ENCODE measurements at regions of chr7 and their contacts with region 1.

Region 1: GRCh38 chr7:112414855-112415490 is 35.3 kb upstream of the IFRD1 start:
- DNase-seq: peak; percentile 42
- ATAC-seq: peak; percentile 80
- H3K4me3 ChIP-seq: no peak overlapping the region
- H3K27ac ChIP-seq: no peak overlapping the region
- H3K4me1 ChIP-seq: peaks cover 32% of the 10 kb centered on the region
- H3K27me3 ChIP-seq: no peaks in the 10 kb centered on the region
- CTCF ChIP-seq: peak; percentile 75
- EP300 ChIP-seq: no peak
- POLR2A ChIP-seq: no peak
- RAD21 ChIP-seq: peak; percentile 36; the same call in 1 of the 2 replicates

Region 2: DNA sequence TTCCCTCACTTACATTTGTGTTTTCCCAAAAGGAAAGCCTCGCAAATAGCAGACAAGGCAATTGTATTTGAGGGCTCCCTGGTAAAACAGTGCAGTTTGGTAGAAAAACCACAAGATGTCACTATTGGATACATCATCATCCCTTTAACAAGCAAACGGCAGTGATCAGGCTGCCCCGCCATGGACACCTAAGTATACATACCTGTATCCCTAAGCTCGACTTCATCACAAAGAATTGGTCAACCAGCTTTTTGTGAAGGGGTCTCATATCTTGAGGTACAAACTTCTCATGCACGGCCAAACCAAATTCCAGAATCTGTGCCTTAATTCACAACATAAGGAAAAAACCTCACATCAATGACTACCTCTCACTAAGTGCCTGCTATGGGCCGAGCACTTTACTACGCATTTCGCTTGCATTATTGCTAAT is 673.1 kb before region 1 on chr7:
- CTCF ChIA-PET with region 1: interaction called, 6 read pairs
- POLR2A ChIA-PET with region 1: no interaction called
- in situ Hi-C with region 1: no loop called
- intact Hi-C with region 1: loop called (anchors 1 kb)
- DNase-seq: peak; percentile 61
- ATAC-seq: peak; percentile 92
- H3K4me3 ChIP-seq: no peak overlapping the region
- H3K27ac ChIP-seq: no peak overlapping the region
- H3K4me1 ChIP-seq: peaks cover 7% of the 10 kb centered on the region
- H3K27me3 ChIP-seq: no peaks in the 10 kb centered on the region
- CTCF ChIP-seq: peak; percentile 75
- EP300 ChIP-seq: no peak
- POLR2A ChIP-seq: no peak
- RAD21 ChIP-seq: peak; percentile 53; the same call in 1 of the 2 replicates

Region 3: DNA sequence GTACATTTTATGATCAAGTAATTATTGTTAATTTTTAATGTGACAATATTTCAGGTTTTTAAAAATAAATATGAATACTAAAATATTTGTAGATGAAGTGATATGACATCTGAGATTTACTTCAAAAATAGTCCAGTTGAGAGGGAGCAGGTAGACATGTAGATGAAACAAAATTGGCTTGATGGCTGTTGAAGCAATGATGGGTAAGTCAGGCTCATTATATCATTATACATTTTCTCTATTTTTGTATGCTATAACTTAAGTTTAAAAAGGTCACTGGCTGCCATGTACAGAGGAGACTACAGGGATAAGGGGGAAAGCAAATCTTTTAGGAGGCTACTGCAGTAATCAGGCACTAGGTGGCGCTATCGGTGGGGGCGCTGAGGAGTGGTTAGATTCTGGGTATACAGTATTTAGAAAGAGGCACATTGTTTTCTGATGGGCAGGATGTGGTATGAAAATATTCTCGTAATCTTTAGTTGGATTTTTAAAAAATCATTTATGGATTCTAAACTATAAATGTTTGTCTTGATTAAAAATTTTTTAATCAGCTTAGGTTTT is 662.9 kb before region 1 on chr7:
- CTCF ChIA-PET with region 1: no interaction called
- POLR2A ChIA-PET with region 1: no interaction called
- in situ Hi-C with region 1: loop called (anchors 5 kb)
- intact Hi-C with region 1: no loop called
- DNase-seq: peak; percentile 54
- ATAC-seq: peak; percentile 96
- H3K4me3 ChIP-seq: no peak overlapping the region
- H3K27ac ChIP-seq: no peak overlapping the region
- H3K4me1 ChIP-seq: peaks cover 28% of the 10 kb centered on the region
- H3K27me3 ChIP-seq: no peaks in the 10 kb centered on the region
- CTCF ChIP-seq: peak; percentile 79
- EP300 ChIP-seq: no peak
- POLR2A ChIP-seq: no peak
- RAD21 ChIP-seq: 0 out of 2 replicates have a peak, but pooled peaks have one; percentile 34

Region 4: DNA sequence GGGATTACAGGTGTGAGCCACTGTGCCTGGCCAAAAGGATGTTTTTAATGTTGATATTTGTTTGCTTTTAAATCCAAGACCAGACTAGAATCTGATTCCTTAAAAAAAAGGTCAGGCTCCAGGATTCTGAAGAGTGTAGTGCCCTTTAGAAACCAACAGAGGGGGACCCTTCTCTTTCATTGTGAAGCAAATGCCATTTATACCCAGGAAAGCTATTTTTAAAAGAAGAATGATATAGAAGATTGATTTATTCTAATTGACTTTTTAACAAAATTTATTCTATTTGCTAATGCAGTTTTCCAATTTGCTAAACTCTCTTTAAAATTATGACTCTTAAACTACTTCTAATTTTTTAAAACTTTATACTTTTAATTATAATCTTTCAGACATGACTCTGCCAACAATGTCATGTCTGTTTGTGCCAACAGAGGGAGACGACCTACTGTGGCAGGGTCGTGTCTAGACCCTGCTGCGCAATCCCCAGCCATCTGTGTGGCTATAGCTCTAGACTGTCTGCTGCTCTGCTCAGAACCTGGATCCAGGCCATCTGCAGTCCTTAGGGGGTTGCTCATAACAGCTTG is 651.7 kb before region 1 on chr7:
- CTCF ChIA-PET with region 1: interaction called, 16 read pairs
- POLR2A ChIA-PET with region 1: no interaction called
- in situ Hi-C with region 1: no loop called
- intact Hi-C with region 1: loop called (anchors 1 kb)
- DNase-seq: peak; percentile 42
- ATAC-seq: peak; percentile 90
- H3K4me3 ChIP-seq: no peak overlapping the region
- H3K27ac ChIP-seq: no peak overlapping the region
- H3K4me1 ChIP-seq: no peaks in the 10 kb centered on the region
- H3K27me3 ChIP-seq: no peaks in the 10 kb centered on the region; a peak in 1 of 5 replicates
- CTCF ChIP-seq: no peak
- EP300 ChIP-seq: no peak
- POLR2A ChIP-seq: no peak
- RAD21 ChIP-seq: peak; percentile 15; the same call in 1 of the 2 replicates

Region 5: GRCh38 chr7:111855161-111855856 is 559.7 kb before region 1 on chr7:
- CTCF ChIA-PET with region 1: no interaction called
- POLR2A ChIA-PET with region 1: no interaction called
- in situ Hi-C with region 1: no loop called
- intact Hi-C with region 1: loop called (anchors 5 kb)
- DNase-seq: peak; percentile 21
- ATAC-seq: peak; percentile 87
- H3K4me3 ChIP-seq: no peak overlapping the region
- H3K27ac ChIP-seq: no peak overlapping the region
- H3K4me1 ChIP-seq: no peaks in the 10 kb centered on the region
- H3K27me3 ChIP-seq: no peaks in the 10 kb centered on the region
- CTCF ChIP-seq: peak; percentile 66
- EP300 ChIP-seq: no peak
- POLR2A ChIP-seq: no peak
- RAD21 ChIP-seq: no peak

Region 6: GRCh38 chr7:111953611-111954010 is 461.4 kb before region 1 on chr7:
- CTCF ChIA-PET with region 1: interaction called, 3 read pairs
- POLR2A ChIA-PET with region 1: no interaction called
- in situ Hi-C with region 1: no loop called
- intact Hi-C with region 1: loop called (anchors 1 kb)
- DNase-seq: peak; percentile 77
- ATAC-seq: peak; percentile 98
- H3K4me3 ChIP-seq: no peak overlapping the region
- H3K27ac ChIP-seq: no peak overlapping the region
- H3K4me1 ChIP-seq: peaks cover 16% of the 10 kb centered on the region
- H3K27me3 ChIP-seq: no peaks in the 10 kb centered on the region
- CTCF ChIP-seq: peak; percentile 73
- EP300 ChIP-seq: no peak
- POLR2A ChIP-seq: no peak
- RAD21 ChIP-seq: no peak

Region 7: DNA sequence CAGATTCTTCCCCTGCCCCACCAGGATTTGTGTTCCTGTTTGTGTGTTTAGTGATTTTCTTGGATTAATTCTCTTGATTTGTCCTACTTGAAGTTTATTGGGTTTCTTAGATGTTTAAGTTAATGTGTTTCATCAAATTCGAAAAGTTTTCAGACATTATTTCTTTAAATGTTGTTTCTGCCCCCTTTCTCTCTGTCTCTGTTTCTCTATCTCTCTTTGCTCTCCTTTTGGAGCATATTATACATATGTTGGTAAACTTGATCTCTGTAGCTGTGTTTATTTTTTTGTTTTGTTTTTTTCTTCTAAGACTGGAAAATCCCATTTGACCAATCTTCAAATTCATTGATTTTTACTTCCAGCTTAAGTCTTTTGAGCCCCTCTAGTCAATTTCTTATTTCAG is 92.9 kb before region 1 on chr7:
- CTCF ChIA-PET with region 1: no interaction called
- POLR2A ChIA-PET with region 1: no interaction called
- in situ Hi-C with region 1: no loop called
- intact Hi-C with region 1: no loop called
- DNase-seq: no peak
- ATAC-seq: no peak
- H3K4me3 ChIP-seq: no peak overlapping the region
- H3K27ac ChIP-seq: no peak overlapping the region
- H3K4me1 ChIP-seq: no peaks in the 10 kb centered on the region
- H3K27me3 ChIP-seq: no peaks in the 10 kb centered on the region
- CTCF ChIP-seq: no peak
- EP300 ChIP-seq: no peak
- POLR2A ChIP-seq: no peak
- RAD21 ChIP-seq: no peak

Region 8: DNA sequence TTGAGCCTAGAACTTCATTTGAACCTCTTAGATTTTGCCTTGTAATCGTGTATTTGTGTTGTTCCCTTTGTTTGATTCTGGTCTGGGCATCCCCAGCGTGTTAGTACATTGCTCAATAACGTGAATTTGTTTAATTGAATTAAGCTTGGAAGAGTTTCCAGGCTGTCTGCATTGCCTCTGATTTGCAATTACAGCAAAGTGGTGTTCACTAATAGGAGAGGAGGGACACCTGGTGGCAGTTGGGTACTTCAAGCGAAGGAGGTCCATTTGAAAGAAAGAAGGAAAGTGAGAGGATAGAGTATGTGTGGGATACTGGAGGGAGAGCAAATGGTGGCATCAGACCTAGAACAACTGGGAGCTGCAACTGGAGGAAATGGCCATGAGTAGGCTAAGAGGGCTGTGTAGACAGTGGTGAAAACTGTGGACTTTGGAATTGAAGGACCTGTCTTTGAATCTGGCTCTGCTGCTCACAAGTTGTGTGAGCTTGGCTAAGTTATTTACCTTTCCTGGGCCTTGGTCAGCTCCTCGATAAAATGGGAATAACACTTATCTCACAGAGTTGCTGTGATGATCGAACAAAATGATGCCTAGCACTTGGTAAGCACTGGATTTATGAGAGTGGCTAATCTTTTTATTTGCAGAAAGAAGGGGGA is 81.0 kb after region 1 on chr7:
- CTCF ChIA-PET with region 1: no interaction called
- POLR2A ChIA-PET with region 1: no interaction called
- in situ Hi-C with region 1: no loop called
- intact Hi-C with region 1: loop called (anchors 5 kb)
- DNase-seq: peak; percentile 48
- ATAC-seq: peak; percentile 91
- H3K4me3 ChIP-seq: no peak overlapping the region
- H3K27ac ChIP-seq: no peak overlapping the region
- H3K4me1 ChIP-seq: peaks cover 10% of the 10 kb centered on the region; the same call in 1 of the 2 replicates
- H3K27me3 ChIP-seq: no peaks in the 10 kb centered on the region; a peak in 1 of 5 replicates
- CTCF ChIP-seq: peak; percentile 79
- EP300 ChIP-seq: no peak
- POLR2A ChIP-seq: no peak
- RAD21 ChIP-seq: peak; percentile 65; the same call in 1 of the 2 replicates